Common myeloid progenitor, CD34-positive (primary cell): ENCODE measurements at regions of chr15 and their contacts with region 1.

Region 1: GRCh38 chr15:63870403-63871209 is 36.9 kb upstream of the HERC1 start:
- DNase-seq: peak in 2 of 3 donors; percentile 31 to 34
- H3K4me3 ChIP-seq: no peak overlapping the region
- H3K27ac ChIP-seq: no peak overlapping the region
- H3K4me1 ChIP-seq: peaks cover 0 to 4% (median 0%) of the 10 kb centered on the region in 4 experiments
- H3K27me3 ChIP-seq: no peaks in the 10 kb centered on the region

Region 2: GRCh38 chr15:63881431-63881830 is 10.8 kb after region 1 on chr15:
- CTCF ChIA-PET with region 1: interaction called, 22 read pairs
- POLR2A ChIA-PET with region 1: interaction called, 3 read pairs
- DNase-seq: no peak
- H3K4me3 ChIP-seq: no peak overlapping the region
- H3K27ac ChIP-seq: no peak overlapping the region
- H3K4me1 ChIP-seq: peaks cover 0 to 7% (median 0%) of the 10 kb centered on the region in 4 experiments
- H3K27me3 ChIP-seq: no peaks in the 10 kb centered on the region

Region 3: GRCh38 chr15:63902671-63903035 is 32.0 kb after region 1 on chr15:
- CTCF ChIA-PET with region 1: no interaction called
- POLR2A ChIA-PET with region 1: no interaction called
- DNase-seq: no peak
- H3K4me3 ChIP-seq: no peak overlapping the region
- H3K27ac ChIP-seq: no peak overlapping the region
- H3K4me1 ChIP-seq: peaks cover 0 to 48% (median 26%) of the 10 kb centered on the region in 4 experiments
- H3K27me3 ChIP-seq: no peaks in the 10 kb centered on the region